Vagina (tissue), 2 donors: ENCODE measurements at regions of chr4 and their contacts with region 1.

Region 1: DNA sequence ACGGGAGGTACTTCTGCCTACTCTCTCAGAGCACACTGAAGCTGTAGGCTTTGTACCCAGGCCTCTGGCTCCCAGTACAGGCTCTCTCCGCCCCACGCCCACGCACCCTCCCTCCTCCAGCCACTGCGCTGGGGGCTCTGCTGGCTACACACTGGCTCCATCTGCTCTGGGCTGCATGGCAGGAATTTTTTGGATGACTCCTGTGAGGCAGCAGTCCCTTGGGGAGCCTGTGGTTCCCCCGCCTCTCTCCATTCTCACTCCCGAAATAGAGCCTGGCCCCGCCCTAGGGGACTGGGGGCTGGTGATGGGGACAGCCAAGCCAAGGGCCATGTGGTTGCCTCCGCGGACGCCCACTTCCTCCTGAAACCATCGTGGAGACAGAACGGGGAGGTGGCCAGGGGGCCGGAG is 58.1 kb upstream of the ADRA2C start:
- DNase-seq: no peak
- H3K4me3 ChIP-seq: no peak overlapping the region
- H3K27ac ChIP-seq: no peak overlapping the region
- H3K4me1 ChIP-seq: peaks cover 16% of the 10 kb centered on the region
- H3K27me3 ChIP-seq: no peaks in the 10 kb centered on the region
- CTCF ChIP-seq: no peak
- POLR2A ChIP-seq: no peak

Region 2: GRCh38 chr4:3644849-3645621 is 63.1 kb before region 1 on chr4:
- intact Hi-C with region 1: loop called (anchors 5 kb)
- DNase-seq: no peak
- H3K4me3 ChIP-seq: no peak overlapping the region
- H3K27ac ChIP-seq: peak overlapping the region; percentile 72
- H3K4me1 ChIP-seq: peaks cover 22% of the 10 kb centered on the region
- H3K27me3 ChIP-seq: no peaks in the 10 kb centered on the region
- CTCF ChIP-seq: no peak
- POLR2A ChIP-seq: no peak